ENCODE measurements at regions of chr18 and their contacts with region 1.

Region 1: GRCh38 chr18:50218432-50219197 is 23.7 kb upstream of the MYO5B start:
- DNase-seq: peak; percentile 57
- ATAC-seq: peak; percentile 69
- H3K4me3 Mint-ChIP-seq: no peak overlapping the region
- H3K27ac Mint-ChIP-seq: no peak overlapping the region
- H3K4me1 Mint-ChIP-seq: no peaks in the 10 kb centered on the region
- H3K27me3 Mint-ChIP-seq: peaks cover 13% of the 10 kb centered on the region

Region 2: GRCh38 chr18:50128506-50129271 is 89.9 kb before region 1 on chr18:
- CTCF ChIA-PET with region 1: no interaction called
- POLR2A ChIA-PET with region 1: no interaction called
- DNase-seq: no peak
- ATAC-seq: no peak
- H3K4me3 Mint-ChIP-seq: no peak overlapping the region
- H3K27ac Mint-ChIP-seq: no peak overlapping the region
- H3K4me1 Mint-ChIP-seq: no peaks in the 10 kb centered on the region
- H3K27me3 Mint-ChIP-seq: peaks cover 32% of the 10 kb centered on the region

Region 3: GRCh38 chr18:50231621-50232020 is 13.0 kb after region 1 on chr18:
- CTCF ChIA-PET with region 1: interaction called, 11 read pairs
- POLR2A ChIA-PET with region 1: no interaction called
- DNase-seq: no peak
- ATAC-seq: no peak
- H3K4me3 Mint-ChIP-seq: no peak overlapping the region
- H3K27ac Mint-ChIP-seq: no peak overlapping the region
- H3K4me1 Mint-ChIP-seq: no peaks in the 10 kb centered on the region
- H3K27me3 Mint-ChIP-seq: peaks cover 15% of the 10 kb centered on the region

Region 4: GRCh38 chr18:50341443-50341842 is 122.8 kb after region 1 on chr18:
- CTCF ChIA-PET with region 1: no interaction called
- POLR2A ChIA-PET with region 1: no interaction called
- DNase-seq: no peak
- ATAC-seq: no peak
- H3K4me3 Mint-ChIP-seq: no peak overlapping the region
- H3K27ac Mint-ChIP-seq: no peak overlapping the region
- H3K4me1 Mint-ChIP-seq: no peaks in the 10 kb centered on the region
- H3K27me3 Mint-ChIP-seq: peaks cover 1% of the 10 kb centered on the region

Region 5: DNA sequence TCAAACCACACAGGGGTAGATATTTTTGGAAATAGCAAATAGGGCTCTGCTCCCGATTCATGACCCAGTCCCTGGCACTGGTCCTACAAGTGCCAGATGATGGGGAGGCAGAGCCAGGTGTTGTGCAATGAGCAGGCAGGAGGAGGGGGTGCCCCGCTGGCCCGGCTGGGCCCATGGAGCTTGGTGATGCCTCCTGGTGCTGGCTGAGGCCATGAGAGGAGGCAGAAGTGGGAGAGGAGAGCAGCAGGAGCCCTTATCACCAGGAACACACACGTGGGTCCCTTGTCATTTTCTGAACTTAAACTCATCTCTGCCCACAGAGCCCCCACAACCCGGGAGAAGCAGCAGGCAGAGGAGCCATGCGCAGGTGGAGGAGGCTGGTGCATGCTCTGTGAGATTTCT is 250.8 kb after region 1 on chr18:
- CTCF ChIA-PET with region 1: no interaction called
- POLR2A ChIA-PET with region 1: no interaction called
- DNase-seq: no peak
- ATAC-seq: no peak
- H3K4me3 Mint-ChIP-seq: no peak overlapping the region
- H3K27ac Mint-ChIP-seq: no peak overlapping the region
- H3K4me1 Mint-ChIP-seq: no peaks in the 10 kb centered on the region
- H3K27me3 Mint-ChIP-seq: peaks cover 6% of the 10 kb centered on the region

Measured in activated CD8-positive, alpha-beta T cell treated with anti-CD3 and anti-CD28 coated beads, Interleukin-2, amount 10 ng/mL, durations not matched to agents 7 days and 5 days (primary cell).